Esophagus muscularis mucosa (tissue), 4 donors: ENCODE measurements at regions of chr1 and their contacts with region 1.

Region 1: DNA sequence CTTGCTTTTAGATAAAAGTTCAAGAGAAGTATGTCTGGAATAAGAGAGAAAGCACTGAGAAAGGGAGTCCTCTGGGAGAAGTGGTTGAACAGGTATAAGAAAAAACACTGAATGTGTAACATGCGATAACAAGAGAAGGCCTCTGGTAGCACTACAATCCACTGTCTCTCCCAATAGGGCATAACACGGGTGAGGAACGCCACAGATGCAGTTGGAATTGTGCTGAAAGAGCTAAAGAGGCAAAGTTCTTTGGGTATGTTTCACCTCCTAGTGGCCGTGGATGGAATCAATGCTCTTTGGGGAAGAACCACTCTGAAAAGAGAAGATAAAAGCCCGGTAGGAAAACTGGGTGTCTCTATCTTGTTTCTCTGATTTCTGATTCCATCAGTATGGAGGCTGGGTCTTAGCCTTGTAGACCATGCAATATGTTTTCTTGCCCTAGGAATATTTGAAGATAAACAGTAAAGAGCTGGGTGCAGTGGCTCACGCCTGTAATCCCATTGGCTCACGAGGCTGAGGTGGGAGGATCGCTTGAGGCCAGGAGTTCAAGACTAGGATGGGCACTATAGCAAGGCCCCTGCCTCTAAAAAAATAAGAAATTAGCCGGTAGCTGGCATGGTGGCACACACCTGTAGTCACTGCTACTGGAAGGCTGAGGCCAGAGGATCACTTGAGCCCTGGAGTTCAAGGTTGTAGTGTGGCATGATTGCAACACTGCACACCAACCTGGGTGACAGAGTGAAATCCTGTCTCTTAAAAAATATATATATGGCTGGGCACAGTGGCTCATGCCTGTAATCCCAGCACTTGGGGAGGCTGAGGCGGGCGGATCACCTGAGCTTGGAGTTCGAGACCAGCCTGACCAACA is 40.4 kb downstream of the DAP3 start:
- DNase-seq: no peak
- H3K4me3 ChIP-seq: no peak overlapping the region
- H3K27ac ChIP-seq: no peak overlapping the region
- H3K4me1 ChIP-seq: peaks cover 0 to 4% (median 0%) of the 10 kb centered on the region in 4 donors
- H3K27me3 ChIP-seq: no peaks in the 10 kb centered on the region
- CTCF ChIP-seq: peak; percentile 46 to 66 (median 51)
- EP300 ChIP-seq: no peak
- POLR2A ChIP-seq: no peak

Region 2: GRCh38 chr1:155678027-155678426 is 51.2 kb before region 1 on chr1:
- intact Hi-C with region 1: loop called (anchors 2 kb)
- DNase-seq: no peak
- H3K4me3 ChIP-seq: no peak overlapping the region
- H3K27ac ChIP-seq: no peak overlapping the region
- H3K4me1 ChIP-seq: peaks cover 12 to 28% (median 21%) of the 10 kb centered on the region in 4 donors
- H3K27me3 ChIP-seq: no peaks in the 10 kb centered on the region
- CTCF ChIP-seq: no peak
- EP300 ChIP-seq: no peak
- POLR2A ChIP-seq: no peak